ENCODE measurements at regions of chr11 and their contacts with region 1.

Region 1: DNA sequence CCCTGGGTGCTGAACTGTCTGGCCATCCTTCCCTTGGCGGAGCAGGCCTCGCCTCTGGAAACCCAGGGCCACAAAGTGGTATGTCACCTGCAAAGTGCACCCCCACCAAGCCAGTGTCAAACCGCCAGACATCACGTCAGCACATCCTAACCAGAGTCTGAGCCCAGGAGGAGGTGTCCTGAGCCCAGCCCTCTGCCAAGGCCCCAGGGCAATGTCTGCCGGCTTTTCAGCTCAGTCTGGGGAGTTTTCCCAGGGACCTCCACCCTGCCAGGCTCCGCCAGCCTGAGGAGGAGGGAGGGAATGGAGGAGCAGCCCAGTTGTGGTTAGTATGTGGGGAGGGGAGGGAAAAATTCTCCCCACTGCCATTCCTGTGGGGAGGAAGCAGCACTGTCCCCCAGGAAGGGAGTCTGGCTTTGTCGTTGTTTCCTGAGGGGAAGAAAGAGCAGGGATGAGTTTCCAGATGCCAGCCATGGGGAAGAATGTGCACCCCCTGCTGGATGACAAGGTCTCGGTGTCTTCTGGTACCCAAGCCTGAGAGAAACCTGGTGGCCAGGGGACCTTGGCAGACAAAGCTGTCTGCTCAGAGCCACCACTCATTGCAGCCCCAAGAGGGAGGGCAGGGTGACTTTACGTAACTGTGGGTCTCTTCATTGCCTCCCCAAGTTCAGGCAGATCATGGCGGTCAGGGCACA is 81.4 kb upstream of the CD82 start:
- DNase-seq: peak in 1 of 5 donors; percentile 19
- ATAC-seq: peak in 3 of 4 donors; percentile 24 to 62 (median 40)
- H3K4me3 ChIP-seq: no peak overlapping the region
- H3K27ac ChIP-seq: no peak overlapping the region
- H3K4me1 ChIP-seq: no peaks in the 10 kb centered on the region
- H3K27me3 ChIP-seq: no peaks in the 10 kb centered on the region
- CTCF ChIP-seq: peak in 10 of 12 donors; percentile 20 to 54 (median 40)
- POLR2A ChIP-seq: no peak

Region 2: GRCh38 chr11:44351006-44351660 is 132.9 kb before region 1 on chr11:
- intact Hi-C with region 1: loop called in 1 of 10 experiments (anchors 5 kb)
- DNase-seq: no peak
- ATAC-seq: no peak
- H3K4me3 ChIP-seq: no peak overlapping the region
- H3K27ac ChIP-seq: no peak overlapping the region
- H3K4me1 ChIP-seq: peaks cover 0 to 6% (median 0%) of the 10 kb centered on the region in 12 donors
- H3K27me3 ChIP-seq: peaks cover 0 to 8% (median 0%) of the 10 kb centered on the region in 9 donors
- CTCF ChIP-seq: no peak
- POLR2A ChIP-seq: no peak

Region 3: GRCh38 chr11:44445500-44446365 is 38.3 kb before region 1 on chr11:
- intact Hi-C with region 1: no loop called
- DNase-seq: no peak
- ATAC-seq: no peak
- H3K4me3 ChIP-seq: no peak overlapping the region
- H3K27ac ChIP-seq: no peak overlapping the region
- H3K4me1 ChIP-seq: peaks cover 0 to 5% (median 0%) of the 10 kb centered on the region in 12 donors
- H3K27me3 ChIP-seq: no peaks in the 10 kb centered on the region
- CTCF ChIP-seq: no peak
- POLR2A ChIP-seq: no peak